ENCODE measurements at regions of chr2 and their contacts with region 1.

Region 1: DNA sequence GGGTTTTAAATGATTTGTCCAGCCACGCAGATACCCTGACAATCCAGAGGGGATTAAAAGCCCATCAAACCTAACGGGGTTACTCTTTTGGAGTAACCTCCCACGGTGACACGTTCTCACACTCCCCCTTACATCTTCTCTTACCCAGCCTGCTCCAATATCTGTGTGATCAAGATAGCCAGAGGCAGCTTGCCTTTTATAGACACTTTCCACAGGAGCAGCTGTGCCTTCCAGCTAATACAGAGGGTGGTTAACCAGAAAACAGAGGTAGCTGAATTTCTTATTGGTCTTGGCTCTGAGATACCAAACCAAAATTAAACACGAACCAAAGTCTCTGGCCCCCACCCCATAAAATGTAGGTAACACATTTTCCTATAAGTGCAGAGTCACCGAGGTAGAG is 232.9 kb upstream of the PKDCC start:
- DNase-seq: no peak
- ATAC-seq: no peak
- H3K4me3 ChIP-seq: no peak overlapping the region
- H3K4me3 Mint-ChIP-seq: no peak overlapping the region
- H3K27ac ChIP-seq: no peak overlapping the region
- H3K27ac Mint-ChIP-seq: no peak overlapping the region
- H3K4me1 ChIP-seq: no peaks in the 10 kb centered on the region
- H3K4me1 Mint-ChIP-seq: no peaks in the 10 kb centered on the region
- H3K27me3 ChIP-seq: peaks cover 0 to 3% of the 10 kb centered on the region in 2 experiments
- H3K27me3 Mint-ChIP-seq: peaks cover 21 to 30% of the 10 kb centered on the region in 2 donors

Region 2: GRCh38 chr2:42021464-42021863 is 206.5 kb after region 1 on chr2:
- CTCF ChIA-PET with region 1: interaction called in 1 of 2 experiments, 17 read pairs
- POLR2A ChIA-PET with region 1: no interaction called
- DNase-seq: no peak
- ATAC-seq: no peak
- H3K4me3 ChIP-seq: no peak overlapping the region
- H3K4me3 Mint-ChIP-seq: no peak overlapping the region
- H3K27ac ChIP-seq: no peak overlapping the region
- H3K27ac Mint-ChIP-seq: no peak overlapping the region
- H3K4me1 ChIP-seq: no peaks in the 10 kb centered on the region
- H3K4me1 Mint-ChIP-seq: no peaks in the 10 kb centered on the region
- H3K27me3 ChIP-seq: peaks cover 0 to 10% of the 10 kb centered on the region in 2 experiments
- H3K27me3 Mint-ChIP-seq: peaks cover 9 to 31% of the 10 kb centered on the region in 2 donors

Region 3: DNA sequence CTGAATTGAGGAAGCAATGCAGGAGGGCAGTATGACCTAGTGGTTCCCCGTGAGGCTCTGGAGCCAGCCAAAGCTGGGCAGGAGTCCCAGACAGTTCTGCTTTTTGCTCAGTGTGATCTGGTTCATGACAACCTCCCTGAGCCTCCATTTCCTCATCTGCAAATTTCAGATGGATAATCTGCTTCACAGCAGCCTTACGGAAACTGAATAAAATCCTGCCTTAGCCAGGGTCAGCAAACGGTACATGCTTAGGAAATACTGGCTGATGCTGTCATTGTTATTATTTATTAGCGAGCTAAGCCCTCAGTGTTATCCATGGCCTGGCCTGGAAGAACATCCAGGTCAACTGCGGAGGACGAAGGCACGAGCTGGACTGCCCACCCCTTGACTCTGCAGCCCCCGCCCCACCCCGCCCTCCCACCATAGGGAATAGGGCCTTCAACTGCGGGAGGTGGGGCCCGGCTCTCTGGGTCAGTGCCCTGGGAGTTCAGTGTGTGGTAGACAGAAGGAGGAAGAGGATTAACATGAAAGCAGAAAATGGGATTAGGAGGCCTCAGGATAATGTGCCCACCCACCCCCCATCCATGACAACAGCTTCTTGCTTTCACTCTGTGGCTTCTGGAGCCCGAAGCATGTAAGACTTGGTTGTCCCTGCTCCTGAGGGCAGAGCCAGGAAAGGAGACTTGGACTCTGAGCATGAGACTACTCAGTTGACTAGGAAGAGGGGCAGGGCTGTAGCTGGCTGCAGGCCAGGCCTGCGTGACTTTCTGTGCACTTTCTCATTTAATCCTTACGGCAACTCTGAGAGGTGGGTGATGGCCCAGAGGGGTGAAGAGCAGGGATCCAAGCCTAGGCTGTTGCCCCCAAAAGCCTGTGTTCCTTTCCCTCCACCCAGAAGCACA is 246.0 kb after region 1 on chr2:
- CTCF ChIA-PET with region 1: no interaction called
- POLR2A ChIA-PET with region 1: no interaction called
- DNase-seq: no peak
- ATAC-seq: no peak
- H3K4me3 ChIP-seq: no peak overlapping the region
- H3K4me3 Mint-ChIP-seq: no peak overlapping the region
- H3K27ac ChIP-seq: no peak overlapping the region
- H3K27ac Mint-ChIP-seq: no peak overlapping the region
- H3K4me1 ChIP-seq: no peaks in the 10 kb centered on the region
- H3K4me1 Mint-ChIP-seq: no peaks in the 10 kb centered on the region
- H3K27me3 ChIP-seq: peaks cover 0 to 27% of the 10 kb centered on the region in 2 experiments
- H3K27me3 Mint-ChIP-seq: peaks cover 4 to 10% of the 10 kb centered on the region in 2 donors